Heart right ventricle (tissue), 16 donors: ENCODE measurements at regions of chr15 and their contacts with region 1.

Region 1: GRCh38 chr15:100279446-100279845 is 62.3 kb downstream of the ADAMTS17 start:
- DNase-seq: no peak
- ATAC-seq: peak in 5 of 8 donors; percentile 33 to 69 (median 53)
- H3K4me3 ChIP-seq: no peak overlapping the region
- H3K27ac ChIP-seq: no peak overlapping the region
- H3K4me1 ChIP-seq: peaks cover 0 to 20% (median 0%) of the 10 kb centered on the region in 9 donors
- H3K27me3 ChIP-seq: peaks cover 0 to 4% (median 0%) of the 10 kb centered on the region in 7 donors
- CTCF ChIP-seq: no peak

Region 2: GRCh38 chr15:100167884-100168375 is 111.5 kb before region 1 on chr15:
- intact Hi-C with region 1: no loop called
- DNase-seq: peak in 1 of 2 donors; percentile 22
- ATAC-seq: peak; percentile 45 to 86 (median 72)
- H3K4me3 ChIP-seq: no peak overlapping the region
- H3K27ac ChIP-seq: peak overlapping the region in 3 of 10 donors; percentile 3 to 53 (median 44)
- H3K4me1 ChIP-seq: peaks cover 0 to 13% (median 7%) of the 10 kb centered on the region in 9 donors
- H3K27me3 ChIP-seq: no peaks in the 10 kb centered on the region
- CTCF ChIP-seq: no peak

Region 3: GRCh38 chr15:100211855-100212850 is 67.3 kb before region 1 on chr15:
- intact Hi-C with region 1: loop called in 1 of 10 experiments (anchors 10 kb)
- DNase-seq: no peak
- ATAC-seq: no peak
- H3K4me3 ChIP-seq: no peak overlapping the region
- H3K27ac ChIP-seq: no peak overlapping the region
- H3K4me1 ChIP-seq: peaks cover 0 to 21% (median 13%) of the 10 kb centered on the region in 9 donors
- H3K27me3 ChIP-seq: no peaks in the 10 kb centered on the region
- CTCF ChIP-seq: no peak